Activated naive CD4-positive, alpha-beta T cell treated with anti-CD3 and anti-CD28 coated beads for 36 hours (primary cell): ENCODE measurements at regions of chrX and their contacts with region 1.

Region 1: DNA sequence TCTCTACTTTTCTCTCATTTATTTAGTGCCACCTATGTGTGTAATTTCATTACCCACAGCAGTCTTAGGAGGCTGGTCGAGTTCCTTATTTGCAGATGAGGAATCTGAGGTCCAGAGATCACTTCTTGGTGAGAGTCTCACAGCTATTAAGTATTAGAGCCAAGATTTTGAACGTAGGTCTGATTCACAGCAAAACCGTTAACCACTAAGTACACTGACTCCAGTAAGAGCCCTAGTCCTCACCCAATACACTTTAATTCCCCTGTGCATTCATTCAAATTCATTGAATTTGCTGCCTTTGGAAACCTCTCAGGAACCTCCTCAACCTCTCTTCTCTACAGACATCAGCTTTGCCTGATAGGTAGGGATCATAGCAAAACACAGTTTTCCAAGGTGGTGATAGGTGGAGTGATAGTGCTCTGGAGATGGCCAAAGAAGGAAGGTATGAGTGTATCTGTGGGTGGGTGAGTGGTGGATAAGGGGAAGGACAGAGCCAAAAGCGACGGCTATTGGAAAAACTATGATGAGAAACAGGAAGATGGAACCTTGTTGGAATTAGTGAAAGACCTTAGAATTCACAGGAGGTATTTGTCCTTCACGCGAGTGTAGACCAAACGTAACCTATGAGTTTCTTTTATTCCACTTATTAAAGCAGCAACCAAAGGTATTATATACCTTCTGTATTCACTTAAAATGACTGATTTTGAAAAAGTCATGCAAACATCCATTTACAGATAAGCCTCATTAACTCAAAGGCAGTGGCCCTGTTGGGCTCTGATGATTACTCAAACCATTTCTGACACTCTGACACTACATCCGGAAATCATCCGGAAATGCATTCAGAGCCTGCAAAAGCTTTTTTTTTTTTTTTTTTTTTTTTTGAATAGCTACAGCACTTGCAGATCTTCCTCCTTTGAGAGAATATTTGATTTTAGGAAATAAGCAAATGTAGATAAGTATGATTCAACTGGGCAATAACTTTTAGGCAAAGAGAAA is 6.3 kb downstream of the FMR1 start:
- DNase-seq: peak; percentile 38
- H3K4me3 Mint-ChIP-seq: peak overlapping the region; percentile 42
- H3K27ac Mint-ChIP-seq: peak overlapping the region; percentile 90
- H3K4me1 Mint-ChIP-seq: peaks cover 50% of the 10 kb centered on the region
- H3K27me3 Mint-ChIP-seq: no peaks in the 10 kb centered on the region

Region 2: GRCh38 chrX:147757750-147758149 is 160.2 kb before region 1 on chrX:
- CTCF ChIA-PET with region 1: no interaction called
- intact Hi-C with region 1: no loop called
- DNase-seq: no peak
- H3K4me3 Mint-ChIP-seq: no peak overlapping the region
- H3K27ac Mint-ChIP-seq: no peak overlapping the region
- H3K4me1 Mint-ChIP-seq: no peaks in the 10 kb centered on the region
- H3K27me3 Mint-ChIP-seq: no peaks in the 10 kb centered on the region

Region 3: DNA sequence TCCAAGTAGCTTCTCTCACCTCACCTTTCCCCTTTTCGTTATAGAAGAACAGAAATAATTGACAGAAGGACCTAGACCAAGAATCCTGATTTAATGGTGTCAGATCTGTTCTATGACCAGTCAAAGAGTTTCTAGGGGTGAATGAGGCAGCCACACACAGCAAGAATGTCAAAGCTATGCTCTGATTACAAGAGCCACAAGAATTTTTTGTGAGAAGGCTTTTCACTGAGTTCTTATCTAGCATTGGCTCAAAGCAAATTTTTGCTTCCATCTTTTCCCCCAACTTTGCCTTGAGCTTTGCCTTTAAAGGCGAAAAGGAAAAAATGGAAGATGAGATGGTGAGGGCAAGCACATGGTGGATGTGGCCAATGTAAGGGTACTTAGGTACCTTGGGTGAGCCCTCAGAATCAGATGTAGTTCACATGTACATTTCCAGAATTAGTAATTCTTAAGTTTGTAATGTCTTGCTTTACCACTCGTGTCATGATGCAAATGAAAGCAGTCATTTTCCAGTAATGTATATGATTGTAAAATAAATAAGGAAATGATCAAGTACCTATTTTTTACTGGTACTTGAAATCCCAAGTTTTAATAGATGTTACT is 17.3 kb after region 1 on chrX:
- CTCF ChIA-PET with region 1: no interaction called
- intact Hi-C with region 1: loop called (anchors 1 kb)
- DNase-seq: no peak
- H3K4me3 Mint-ChIP-seq: no peak overlapping the region
- H3K27ac Mint-ChIP-seq: no peak overlapping the region
- H3K4me1 Mint-ChIP-seq: peaks cover 1% of the 10 kb centered on the region
- H3K27me3 Mint-ChIP-seq: no peaks in the 10 kb centered on the region